B cell (primary cell): ENCODE measurements at regions of chr21 and their contacts with region 1.

Region 1: DNA sequence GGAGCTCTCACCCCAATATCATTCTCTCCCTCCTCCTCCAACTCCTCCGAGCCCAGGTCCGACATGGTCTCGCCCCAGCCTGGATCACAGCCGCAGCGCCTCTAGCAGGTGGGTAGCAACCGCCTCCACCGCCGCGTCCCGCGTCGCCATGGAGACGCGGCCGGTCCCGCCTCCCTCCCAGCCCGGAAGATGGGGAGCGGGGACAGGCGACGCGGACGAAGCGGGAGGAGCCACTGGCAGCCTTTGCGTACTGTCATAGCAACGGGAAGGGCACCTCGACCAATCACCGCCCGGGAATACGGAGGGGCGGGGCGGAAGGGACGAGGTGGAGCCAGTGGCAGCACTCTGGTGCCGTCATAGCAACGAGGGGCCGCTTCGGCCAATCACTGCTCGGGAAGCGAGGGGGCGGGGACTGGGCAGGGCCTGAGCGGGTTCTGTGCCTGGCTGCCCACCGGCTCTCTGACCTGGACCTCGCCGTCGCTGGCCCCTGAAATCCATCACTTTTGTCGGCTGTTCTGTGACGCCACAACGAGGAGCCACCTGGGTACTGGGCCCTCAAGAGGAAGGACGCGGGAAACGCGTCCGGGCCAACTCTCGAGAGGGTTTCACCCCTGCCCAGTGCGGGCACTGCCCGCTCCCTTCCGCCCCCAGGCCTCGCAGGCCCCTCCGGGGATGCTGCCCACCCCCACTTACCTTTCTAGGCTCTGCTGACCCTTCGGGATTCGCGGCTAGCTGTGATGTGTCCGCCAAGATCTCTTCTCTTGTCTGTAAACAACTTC is at the start of gene RSPH1:
- DNase-seq: peak; percentile 99
- ATAC-seq: peak; percentile 96
- H3K4me3 ChIP-seq: peak within 1 kb of the TSS; percentile 59 to 78 (median 74)
- H3K4me3 Mint-ChIP-seq: peak within 1 kb of the TSS; percentile 94
- H3K27ac ChIP-seq: peak within 1 kb of the TSS; percentile 66 to 85
- H3K27ac Mint-ChIP-seq: peak within 1 kb of the TSS; percentile 89
- H3K4me1 ChIP-seq: peaks cover 11 to 13% of the 10 kb centered on the region in 2 donors
- H3K4me1 Mint-ChIP-seq: peaks cover 15% of the 10 kb centered on the region
- H3K27me3 ChIP-seq: peaks cover 0 to 5% (median 0%) of the 10 kb centered on the region in 4 experiments
- H3K27me3 Mint-ChIP-seq: peaks cover 4% of the 10 kb centered on the region
- CTCF ChIP-seq: no peak
- total RNA-seq, gene RSPH1: 0.64 and 1.0 TPM in 2 replicates

Region 2: DNA sequence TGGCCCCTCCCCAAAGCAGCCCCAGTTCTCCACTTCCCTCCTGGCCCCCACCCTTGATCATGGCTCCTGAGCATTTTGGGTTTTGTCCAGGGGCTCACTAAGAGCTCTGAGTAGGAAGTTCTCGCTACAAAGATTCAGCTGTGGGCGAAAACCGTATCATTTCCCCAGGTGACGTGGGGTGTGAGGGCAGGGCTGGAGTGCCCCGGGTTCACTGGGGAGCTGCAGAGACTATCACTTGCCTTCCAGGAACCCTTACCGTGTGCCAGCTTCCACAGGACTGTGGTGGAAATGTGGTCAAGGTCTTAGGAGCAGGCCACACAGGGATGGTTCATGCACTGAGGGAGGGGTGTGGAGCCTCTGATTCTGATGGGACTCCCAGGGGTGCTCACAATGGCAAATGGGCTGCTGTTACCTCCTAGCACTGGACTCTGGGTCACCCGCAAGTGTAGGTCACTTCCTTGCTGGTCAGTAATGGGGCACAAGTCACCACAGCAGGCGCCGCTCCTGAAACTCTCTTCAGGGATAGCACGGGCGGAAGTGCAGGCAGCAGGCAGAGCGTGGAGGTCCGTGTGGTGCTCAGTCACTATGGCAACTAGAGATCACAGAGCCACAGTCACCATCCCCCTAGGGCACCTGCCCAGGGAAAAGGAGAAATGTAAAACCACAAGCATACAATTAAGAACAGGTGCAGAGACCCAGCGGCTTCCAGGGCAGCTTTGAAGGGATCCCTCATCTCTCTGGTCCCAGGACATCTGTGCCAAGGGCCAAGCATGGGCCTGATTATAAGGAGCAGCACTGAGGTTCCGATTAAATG is 35.7 kb before region 1 on chr21:
- CTCF ChIA-PET with region 1: no interaction called
- POLR2A ChIA-PET with region 1: interaction called, 3 read pairs
- intact Hi-C with region 1: loop called (anchors 1 kb)
- DNase-seq: peak; percentile 94
- ATAC-seq: peak; percentile 69
- H3K4me3 ChIP-seq: peak overlapping the region in 4 of 5 experiments; percentile 20 to 67 (median 40)
- H3K4me3 Mint-ChIP-seq: peak overlapping the region; percentile 88
- H3K27ac ChIP-seq: peak overlapping the region; percentile 83 to 93
- H3K27ac Mint-ChIP-seq: peak overlapping the region; percentile 99
- H3K4me1 ChIP-seq: peaks cover 60% of the 10 kb centered on the region in 2 donors
- H3K4me1 Mint-ChIP-seq: peaks cover 59% of the 10 kb centered on the region
- H3K27me3 ChIP-seq: no peaks in the 10 kb centered on the region
- H3K27me3 Mint-ChIP-seq: no peaks in the 10 kb centered on the region
- CTCF ChIP-seq: no peak

Region 3: GRCh38 chr21:42513985-42514882 is 17.9 kb after region 1 on chr21:
- CTCF ChIA-PET with region 1: interaction called, 3 read pairs
- POLR2A ChIA-PET with region 1: no interaction called
- intact Hi-C with region 1: loop called (anchors 1 kb)
- DNase-seq: peak; percentile 81
- ATAC-seq: peak; percentile 74
- H3K4me3 ChIP-seq: peak overlapping the region; percentile 63 to 94 (median 84)
- H3K4me3 Mint-ChIP-seq: peak overlapping the region; percentile 88
- H3K27ac ChIP-seq: peak overlapping the region; percentile 90 to 91
- H3K27ac Mint-ChIP-seq: peak overlapping the region; percentile 77
- H3K4me1 ChIP-seq: peaks cover 14 to 26% of the 10 kb centered on the region in 2 donors
- H3K4me1 Mint-ChIP-seq: peaks cover 39% of the 10 kb centered on the region
- H3K27me3 ChIP-seq: no peaks in the 10 kb centered on the region
- H3K27me3 Mint-ChIP-seq: no peaks in the 10 kb centered on the region
- CTCF ChIP-seq: no peak

Region 4: DNA sequence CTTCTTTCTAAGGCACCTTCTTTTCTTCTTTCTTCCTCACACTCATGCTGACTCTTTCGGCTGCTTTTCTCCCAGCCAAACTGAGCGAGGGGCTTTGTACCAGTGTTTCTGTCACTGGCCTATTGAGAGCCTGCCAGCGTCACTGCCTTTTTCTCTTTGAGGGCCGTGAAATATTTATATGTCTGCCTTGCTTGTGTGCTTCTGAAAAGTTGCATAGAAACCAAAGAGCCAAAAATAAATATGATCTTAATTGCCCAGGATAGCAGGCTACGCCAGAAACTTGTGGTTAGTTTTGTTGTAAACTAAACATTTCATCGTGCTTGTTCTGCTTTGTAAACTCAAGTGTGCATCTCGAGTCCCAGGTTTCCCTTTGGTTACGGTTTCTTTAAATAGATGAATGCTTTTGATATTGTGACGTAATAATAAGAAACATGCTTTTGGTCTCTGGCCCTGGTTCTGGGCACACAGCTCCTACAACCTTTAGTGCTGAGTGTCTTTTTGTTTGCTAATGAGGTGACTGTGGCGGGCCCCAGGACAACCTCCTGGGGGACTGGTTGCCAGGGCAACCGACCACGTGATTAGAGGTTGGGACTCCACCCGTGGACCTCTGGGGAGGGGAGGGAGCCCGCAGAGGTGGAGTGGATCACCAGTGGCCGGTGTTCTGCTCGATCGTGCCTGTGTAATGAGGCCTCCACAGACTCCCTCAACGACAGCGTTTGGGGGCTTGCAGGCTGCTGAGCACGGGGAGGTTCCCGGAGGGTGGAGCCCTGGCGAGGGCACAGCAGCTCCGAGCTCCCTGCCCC is 28.2 kb after region 1 on chr21:
- CTCF ChIA-PET with region 1: interaction called, 3 read pairs
- POLR2A ChIA-PET with region 1: no interaction called
- intact Hi-C with region 1: loop called (anchors 1 kb)
- DNase-seq: peak; percentile 96
- ATAC-seq: peak; percentile 85
- H3K4me3 ChIP-seq: peak overlapping the region in 4 of 5 experiments; percentile 29 to 65 (median 41)
- H3K4me3 Mint-ChIP-seq: peak overlapping the region; percentile 88
- H3K27ac ChIP-seq: peak overlapping the region; percentile 97 to 99
- H3K27ac Mint-ChIP-seq: peak overlapping the region; percentile 99
- H3K4me1 ChIP-seq: peaks cover 54 to 59% of the 10 kb centered on the region in 2 donors
- H3K4me1 Mint-ChIP-seq: peaks cover 78% of the 10 kb centered on the region
- H3K27me3 ChIP-seq: no peaks in the 10 kb centered on the region
- H3K27me3 Mint-ChIP-seq: no peaks in the 10 kb centered on the region
- CTCF ChIP-seq: no peak